Activated naive CD4-positive, alpha-beta T cell treated with anti-CD3 and anti-CD28 coated beads, Interleukin-2, amount 10 ng/mL, durations not matched to agents 7 days and 5 days (primary cell): ENCODE measurements at regions of chr1 and their contacts with region 1.

Region 1: GRCh38 chr1:214648801-214649200 is 45.8 kb downstream of the CENPF start:
- DNase-seq: no peak
- H3K4me3 Mint-ChIP-seq: no peak overlapping the region
- H3K27ac Mint-ChIP-seq: no peak overlapping the region
- H3K4me1 Mint-ChIP-seq: peaks cover 25% of the 10 kb centered on the region
- H3K27me3 Mint-ChIP-seq: no peaks in the 10 kb centered on the region

Region 2: GRCh38 chr1:214637722-214638458 is 10.9 kb before region 1 on chr1:
- CTCF ChIA-PET with region 1: interaction called, 12 read pairs
- DNase-seq: peak; percentile 48
- H3K4me3 Mint-ChIP-seq: peak overlapping the region; percentile 39
- H3K27ac Mint-ChIP-seq: no peak overlapping the region
- H3K4me1 Mint-ChIP-seq: peaks cover 9% of the 10 kb centered on the region
- H3K27me3 Mint-ChIP-seq: no peaks in the 10 kb centered on the region

Region 3: DNA sequence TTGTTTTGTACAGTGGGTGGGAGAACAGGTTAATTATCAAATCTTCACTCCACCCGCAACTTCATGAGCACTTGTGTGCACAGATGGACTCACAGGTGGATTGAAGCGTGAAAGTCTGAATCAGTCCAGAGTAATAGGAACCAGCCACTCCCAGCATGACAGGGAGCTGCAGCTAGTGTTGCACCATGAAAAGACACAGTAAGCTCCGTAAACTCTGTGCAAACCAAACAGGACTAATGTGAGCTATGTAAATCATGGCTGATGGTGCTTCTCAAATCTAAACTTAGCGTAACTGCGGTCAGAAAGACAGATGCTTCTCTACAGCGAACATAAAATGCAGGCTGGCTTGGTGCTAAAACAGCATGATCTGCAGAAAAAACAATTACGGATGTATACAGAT is 68.5 kb after region 1 on chr1:
- CTCF ChIA-PET with region 1: no interaction called
- DNase-seq: no peak
- H3K4me3 Mint-ChIP-seq: no peak overlapping the region
- H3K27ac Mint-ChIP-seq: no peak overlapping the region
- H3K4me1 Mint-ChIP-seq: no peaks in the 10 kb centered on the region
- H3K27me3 Mint-ChIP-seq: no peaks in the 10 kb centered on the region

Region 4: DNA sequence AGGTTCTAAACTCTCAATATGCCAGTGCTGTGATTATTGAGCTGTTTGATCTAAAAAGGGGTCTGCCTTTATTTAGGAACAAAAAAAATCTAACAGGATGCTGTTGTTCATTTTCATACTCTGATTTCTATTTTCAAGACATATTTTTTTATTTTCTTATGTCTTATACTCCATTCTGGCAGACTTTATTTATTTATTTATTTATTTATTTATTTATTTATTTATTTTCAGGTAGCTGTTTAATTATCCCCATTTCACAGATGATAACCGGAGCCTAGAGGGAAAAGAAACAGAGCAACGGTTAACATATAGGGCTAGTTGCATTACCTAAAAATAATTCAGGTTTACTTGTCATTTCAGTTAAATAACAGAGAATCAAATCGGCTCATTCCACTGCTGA is 128.6 kb after region 1 on chr1:
- CTCF ChIA-PET with region 1: no interaction called
- DNase-seq: no peak
- H3K4me3 Mint-ChIP-seq: no peak overlapping the region
- H3K27ac Mint-ChIP-seq: no peak overlapping the region
- H3K4me1 Mint-ChIP-seq: no peaks in the 10 kb centered on the region
- H3K27me3 Mint-ChIP-seq: no peaks in the 10 kb centered on the region